Activated CD8-positive, alpha-beta T cell treated with anti-CD3 and anti-CD28 coated beads for 36 hours (primary cell): ENCODE measurements at regions of chr1 and their contacts with region 1.

Region 1: DNA sequence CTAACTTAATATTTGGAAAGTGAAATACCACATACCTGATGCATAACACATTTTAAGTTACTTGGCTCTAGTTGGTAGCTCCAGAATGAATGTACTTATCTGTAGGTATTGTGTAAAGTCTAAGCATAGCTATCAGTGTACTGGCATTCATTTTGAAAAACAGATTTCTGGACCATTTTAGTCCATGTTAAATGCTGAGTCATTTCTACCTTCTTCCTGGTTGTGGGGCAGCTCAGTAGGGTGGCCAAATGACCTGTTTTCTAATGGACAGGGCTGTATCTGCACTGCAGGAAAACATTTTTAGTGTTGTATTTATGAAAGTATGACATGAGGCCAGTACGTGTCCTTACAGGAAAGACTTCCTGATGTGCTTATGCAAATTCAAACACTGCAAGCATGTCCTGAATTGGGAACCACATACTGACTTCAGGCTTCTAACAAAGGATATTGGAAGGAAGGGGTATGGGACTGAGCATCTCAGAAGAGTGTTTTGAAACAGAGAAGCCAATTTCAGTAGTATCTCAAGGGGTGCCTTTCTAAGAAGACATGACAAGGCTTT is 300.3 kb upstream of the B3GALT2 start:
- DNase-seq: no peak
- ATAC-seq: peak; percentile 27
- H3K4me3 Mint-ChIP-seq: no peak overlapping the region
- H3K27ac Mint-ChIP-seq: peak overlapping the region; percentile 40
- H3K4me1 Mint-ChIP-seq: peaks cover 18% of the 10 kb centered on the region
- H3K27me3 Mint-ChIP-seq: no peaks in the 10 kb centered on the region
- CTCF ChIP-seq: no peak

Region 2: GRCh38 chr1:193504920-193505319 is 18.2 kb after region 1 on chr1:
- CTCF ChIA-PET with region 1: no interaction called
- POLR2A ChIA-PET with region 1: no interaction called
- intact Hi-C with region 1: loop called (anchors 1 kb)
- DNase-seq: no peak
- ATAC-seq: no peak
- H3K4me3 Mint-ChIP-seq: no peak overlapping the region
- H3K27ac Mint-ChIP-seq: no peak overlapping the region
- H3K4me1 Mint-ChIP-seq: peaks cover 2% of the 10 kb centered on the region
- H3K27me3 Mint-ChIP-seq: no peaks in the 10 kb centered on the region
- CTCF ChIP-seq: no peak